Esophagus muscularis mucosa (tissue), 4 donors: ENCODE measurements at regions of chr7 and their contacts with region 1.

Region 1: DNA sequence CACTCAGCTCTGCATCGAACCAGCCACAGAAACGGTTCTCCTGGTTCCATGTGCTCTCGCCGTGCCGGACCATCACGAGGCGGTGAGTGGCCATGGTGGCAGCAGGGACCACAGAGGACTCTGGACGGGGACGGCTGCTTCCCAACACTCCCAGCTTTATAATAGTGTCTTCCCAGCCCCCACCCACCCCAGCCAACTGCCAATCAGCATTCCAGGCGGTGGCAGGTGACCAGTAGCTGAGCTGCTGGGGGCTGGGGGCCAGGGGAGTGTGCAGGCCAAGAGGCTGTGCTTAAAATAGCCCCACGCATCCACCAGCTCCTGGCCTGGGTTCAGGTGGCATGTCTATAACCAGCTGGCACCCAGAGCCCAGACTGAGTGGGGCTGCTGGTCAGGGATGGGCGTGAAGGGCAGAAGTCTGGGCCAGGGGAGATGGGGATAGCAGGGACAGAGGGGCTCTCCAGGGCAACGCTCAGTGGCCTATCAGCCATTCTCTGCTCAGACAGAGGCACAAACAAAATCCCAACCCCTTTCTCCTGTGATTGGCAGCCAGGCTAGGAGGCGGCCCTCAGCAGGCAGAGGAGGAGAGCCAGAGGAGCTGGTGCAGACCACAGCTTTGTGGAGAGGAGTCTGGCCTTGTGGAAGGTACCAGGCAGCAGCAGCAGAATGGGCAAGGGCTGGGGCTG is at the start of gene PGAM2:
- DNase-seq: no peak
- H3K4me3 ChIP-seq: no peak within 1 kb of the TSS
- H3K27ac ChIP-seq: no peak within 1 kb of the TSS
- H3K4me1 ChIP-seq: peaks cover 21 to 56% (median 32%) of the 10 kb centered on the region in 4 donors
- H3K27me3 ChIP-seq: no peaks in the 10 kb centered on the region
- CTCF ChIP-seq: no peak
- EP300 ChIP-seq: no peak
- POLR2A ChIP-seq: peak; percentile 5
- total RNA-seq, gene PGAM2: 0.52 to 1.8 (median 0.66) TPM in 3 of 4 donors, not detected in the other

Region 2: DNA sequence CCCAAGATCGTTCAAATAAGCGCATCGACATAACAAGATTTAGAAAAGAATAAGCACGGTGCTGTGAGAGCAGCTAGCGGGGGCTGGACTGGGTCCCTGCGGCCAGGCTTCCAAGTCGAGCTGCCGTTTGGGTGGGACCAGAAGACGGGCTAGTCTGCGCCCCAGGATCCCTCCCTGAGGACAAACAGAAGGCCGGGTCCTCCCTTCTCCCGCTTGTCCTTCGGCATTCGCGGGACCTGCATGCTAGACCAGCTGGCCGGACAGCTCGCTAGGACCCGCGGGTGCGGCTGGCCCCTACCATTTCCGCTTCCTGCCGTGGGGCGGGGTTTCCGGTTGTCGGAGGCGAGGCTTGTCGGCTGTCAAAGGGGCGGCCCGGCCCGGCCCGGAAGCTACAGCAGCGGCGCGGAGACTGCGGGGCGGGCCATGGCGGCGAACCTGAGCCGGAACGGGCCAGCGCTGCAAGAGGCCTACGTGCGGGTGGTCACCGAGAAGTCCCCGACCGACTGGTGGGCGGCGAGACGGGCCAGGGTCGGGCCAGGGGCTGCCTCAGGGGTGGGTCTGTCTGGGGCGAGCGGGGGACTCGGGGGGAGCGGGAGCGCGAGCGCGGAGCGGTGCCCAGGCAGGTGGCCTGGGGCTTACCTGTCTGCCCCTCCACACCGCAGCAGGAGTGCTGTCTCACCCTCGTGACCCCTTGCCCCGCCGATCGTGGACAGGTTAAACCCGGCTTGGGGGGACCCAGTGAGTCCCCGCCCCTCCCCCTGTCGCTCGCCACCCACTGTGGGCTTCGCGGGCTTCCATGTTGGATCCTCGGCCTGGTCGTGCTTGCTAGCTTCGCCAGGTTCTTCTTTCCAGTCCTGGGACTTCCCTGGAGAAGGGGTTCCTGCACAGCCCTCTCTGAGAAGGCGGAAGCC is 21.0 kb before region 1 on chr7 and contains the start of gene DBNL:
- intact Hi-C with region 1: loop called (anchors 2 kb)
- DNase-seq: peak; percentile 98
- H3K4me3 ChIP-seq: peak within 1 kb of the TSS; percentile 77 to 99 (median 86)
- H3K27ac ChIP-seq: peak within 1 kb of the TSS; percentile 85 to 93 (median 86)
- H3K4me1 ChIP-seq: peaks cover 34 to 65% (median 50%) of the 10 kb centered on the region in 4 donors
- H3K27me3 ChIP-seq: no peaks in the 10 kb centered on the region
- CTCF ChIP-seq: peak in 1 of 3 experiments; percentile 22
- EP300 ChIP-seq: no peak
- POLR2A ChIP-seq: peak; percentile 55
- total RNA-seq, gene DBNL: 93.9 to 122 (median 115) TPM